PC-9 (cell line): ENCODE measurements at regions of chr15 and their contacts with region 1.

Region 1: DNA sequence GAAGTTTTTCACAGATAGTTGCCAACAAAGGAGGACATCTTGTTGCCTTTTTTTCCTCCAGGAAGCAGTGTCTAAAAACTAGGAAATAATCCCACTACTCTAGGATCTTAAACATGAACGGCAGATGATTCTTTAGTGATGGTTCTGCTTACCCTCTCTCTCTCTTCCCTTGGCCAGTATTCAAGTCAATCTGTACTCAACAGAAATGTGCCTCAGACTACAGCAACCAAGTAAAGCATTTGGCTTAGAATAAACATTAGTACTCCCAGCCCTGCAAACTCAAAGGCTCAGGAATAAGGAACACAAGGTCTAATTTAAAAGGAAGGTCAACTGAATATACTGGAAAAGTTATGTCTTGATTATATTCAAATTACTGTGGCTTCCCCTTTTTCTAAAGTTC is 8.7 kb downstream of the NPTN start:
- DNase-seq: no peak
- H3K4me3 ChIP-seq: no peak overlapping the region
- H3K27ac ChIP-seq: no peak overlapping the region
- H3K4me1 ChIP-seq: peaks cover 9% of the 10 kb centered on the region
- H3K27me3 ChIP-seq: no peaks in the 10 kb centered on the region
- CTCF ChIP-seq: no peak

Region 2: GRCh38 chr15:73608941-73609340 is 15.6 kb before region 1 on chr15:
- CTCF ChIA-PET with region 1: interaction called, 21 read pairs
- POLR2A ChIA-PET with region 1: no interaction called
- intact Hi-C with region 1: no loop called
- DNase-seq: no peak
- H3K4me3 ChIP-seq: no peak overlapping the region
- H3K27ac ChIP-seq: no peak overlapping the region
- H3K4me1 ChIP-seq: no peaks in the 10 kb centered on the region
- H3K27me3 ChIP-seq: no peaks in the 10 kb centered on the region
- CTCF ChIP-seq: no peak